OCI-LY7 (cell line): ENCODE measurements at regions of chr17 and their contacts with region 1.

Region 1: GRCh38 chr17:81101614-81102306 is 63.5 kb upstream of the PVALEF start:
- DNase-seq: peak; percentile 93
- H3K4me3 ChIP-seq: no peak overlapping the region
- H3K27ac ChIP-seq: no peak overlapping the region
- H3K4me1 ChIP-seq: peaks cover 4% of the 10 kb centered on the region
- CTCF ChIP-seq: peak; percentile 100

Region 2: DNA sequence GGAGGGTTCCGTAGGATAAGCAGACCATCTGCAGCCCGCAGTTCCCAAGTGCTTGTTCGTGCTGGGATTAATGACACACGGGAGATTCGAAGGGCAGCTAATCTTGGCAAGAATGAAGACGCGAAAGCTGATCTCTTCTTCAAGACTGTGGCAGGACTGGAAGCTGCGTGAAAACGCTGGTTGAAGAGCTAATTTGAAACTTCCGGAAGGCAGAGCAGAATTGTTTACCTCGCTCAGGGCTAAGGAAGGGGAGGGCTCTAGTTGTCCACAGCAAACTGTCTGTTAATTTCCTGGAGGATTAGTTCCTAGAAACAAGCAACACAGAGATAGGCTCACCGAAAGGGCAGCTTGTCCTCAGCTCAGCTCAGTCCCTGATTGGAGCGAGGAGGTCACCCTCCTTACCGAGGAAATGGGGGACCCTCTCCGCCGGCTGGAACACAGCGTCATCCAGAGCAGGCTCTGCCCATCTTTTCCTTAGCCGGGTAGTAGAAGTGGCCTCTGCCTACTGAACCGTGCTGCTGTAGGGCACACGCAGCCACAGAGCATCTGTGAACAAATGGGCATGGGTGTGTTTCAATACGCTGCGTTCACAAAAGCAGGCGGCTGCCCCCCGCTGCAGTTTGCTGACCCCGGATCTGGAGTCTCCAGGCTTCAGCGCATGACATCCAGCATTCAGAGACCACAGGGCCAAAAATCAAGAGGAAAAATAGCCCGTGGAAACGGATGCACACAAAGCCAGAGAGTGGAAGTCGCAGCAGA is 83.5 kb before region 1 on chr17:
- CTCF ChIA-PET with region 1: no interaction called
- POLR2A ChIA-PET with region 1: no interaction called
- intact Hi-C with region 1: loop called (anchors 1 kb)
- DNase-seq: no peak
- H3K4me3 ChIP-seq: no peak overlapping the region
- H3K27ac ChIP-seq: no peak overlapping the region
- H3K4me1 ChIP-seq: no peaks in the 10 kb centered on the region
- CTCF ChIP-seq: no peak

Region 3: GRCh38 chr17:81040791-81041337 is 60.9 kb before region 1 on chr17:
- CTCF ChIA-PET with region 1: no interaction called
- POLR2A ChIA-PET with region 1: no interaction called
- intact Hi-C with region 1: loop called (anchors 5 kb)
- DNase-seq: peak; percentile 52
- H3K4me3 ChIP-seq: no peak overlapping the region
- H3K27ac ChIP-seq: no peak overlapping the region
- H3K4me1 ChIP-seq: no peaks in the 10 kb centered on the region
- CTCF ChIP-seq: peak; percentile 81

Region 4: DNA sequence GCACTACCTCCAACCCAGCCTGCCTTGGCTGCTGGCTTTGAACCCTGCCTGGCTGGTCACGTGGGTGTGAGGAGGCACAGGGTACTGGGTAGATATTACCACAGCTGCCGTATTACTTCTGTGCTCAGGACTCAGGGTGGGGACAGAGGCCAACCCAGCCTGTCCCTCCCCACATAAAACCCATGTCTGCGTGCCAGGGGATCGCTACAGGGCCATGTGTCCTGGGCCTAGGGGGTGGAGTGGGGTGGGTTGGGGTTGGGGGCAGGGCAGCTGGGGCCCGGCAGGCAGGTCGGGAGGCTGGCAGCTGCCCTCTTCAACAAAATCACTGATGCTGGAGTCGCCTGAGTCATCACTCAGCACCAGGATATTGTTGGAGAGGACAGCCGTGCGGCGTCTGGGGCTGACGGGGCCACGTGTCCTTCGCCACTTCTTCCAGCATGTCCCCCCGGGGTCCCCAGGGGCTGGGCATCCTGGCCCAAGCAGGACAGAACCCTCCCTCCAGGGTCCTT is 23.9 kb after region 1 on chr17:
- CTCF ChIA-PET with region 1: no interaction called
- POLR2A ChIA-PET with region 1: no interaction called
- intact Hi-C with region 1: no loop called
- DNase-seq: no peak
- H3K4me3 ChIP-seq: no peak overlapping the region
- H3K27ac ChIP-seq: no peak overlapping the region
- H3K4me1 ChIP-seq: no peaks in the 10 kb centered on the region
- CTCF ChIP-seq: no peak

Region 5: GRCh38 chr17:81200695-81201580 is 99.2 kb after region 1 on chr17:
- CTCF ChIA-PET with region 1: no interaction called
- POLR2A ChIA-PET with region 1: no interaction called
- intact Hi-C with region 1: no loop called
- DNase-seq: peak; percentile 75
- H3K4me3 ChIP-seq: no peak overlapping the region
- H3K27ac ChIP-seq: no peak overlapping the region
- H3K4me1 ChIP-seq: peaks cover 7% of the 10 kb centered on the region
- CTCF ChIP-seq: peak; percentile 80

Region 6: DNA sequence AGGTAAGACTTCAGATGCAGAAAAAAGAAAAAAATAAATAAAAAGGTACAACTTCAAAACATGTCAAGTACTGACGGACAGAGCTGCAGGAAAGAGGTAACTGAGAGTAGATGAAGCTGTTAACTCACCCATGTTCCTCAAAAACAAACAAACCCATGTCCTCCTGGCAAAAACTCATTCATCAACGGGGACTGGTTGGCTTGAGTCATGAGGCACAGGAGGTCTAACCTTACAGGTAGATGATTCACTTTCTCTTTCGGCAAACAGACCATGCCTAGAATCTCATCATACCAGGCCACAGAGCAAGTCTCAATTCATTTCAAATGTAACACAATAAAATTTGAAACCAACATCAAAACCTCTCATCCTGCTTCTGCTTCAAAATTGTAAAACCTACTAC is 1008.5 kb after region 1 on chr17:
- CTCF ChIA-PET with region 1: no interaction called
- POLR2A ChIA-PET with region 1: no interaction called
- intact Hi-C with region 1: no loop called
- DNase-seq: no peak
- H3K4me3 ChIP-seq: no peak overlapping the region
- H3K27ac ChIP-seq: no peak overlapping the region
- H3K4me1 ChIP-seq: peaks cover 22% of the 10 kb centered on the region
- CTCF ChIP-seq: no peak